Activated T-helper 1 cell treated with anti-CD3 and anti-CD28 coated beads, Interleukin-12 subunit alpha, Interleukin-12 subunit beta, Interleukin-2, Interleukin-4 antibody, amounts not matched to agents 30 ng/mL and 10 ng/mL and 1 ng/mL, durations not matched to agents 14 hours and 24 hours and 36 hours (primary cell): ENCODE measurements at regions of chr9 and their contacts with region 1.

Region 1: DNA sequence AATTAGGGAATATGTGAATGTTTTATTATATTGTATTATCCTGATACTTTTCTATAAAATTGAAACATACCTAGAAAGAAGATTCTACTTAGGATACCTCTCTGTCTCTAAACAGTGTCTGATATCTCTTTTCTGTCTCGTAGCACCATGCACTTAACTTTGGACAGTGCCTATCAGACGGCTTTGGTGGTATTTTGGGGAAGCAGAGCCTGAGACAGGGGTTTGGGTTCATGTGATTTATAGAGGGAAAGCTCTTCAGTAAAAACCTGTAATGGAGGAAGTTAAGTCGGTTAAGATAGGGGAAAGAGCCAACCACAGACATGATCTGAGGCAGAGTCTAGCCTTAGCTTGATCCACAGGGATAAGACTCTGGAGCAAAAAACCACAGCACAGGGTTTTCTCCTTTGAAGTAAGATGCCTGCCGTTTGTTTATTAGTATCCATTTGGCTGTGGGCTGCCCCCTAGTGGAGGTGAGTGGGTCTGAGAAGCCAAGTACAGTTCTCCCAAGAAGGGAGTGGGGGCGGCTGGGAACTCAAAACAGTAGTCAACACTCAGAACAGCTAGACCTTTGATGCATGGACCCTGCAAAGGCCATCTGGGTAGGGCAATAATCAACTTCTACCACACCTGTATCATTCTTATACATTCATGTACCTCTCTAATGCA is 141.2 kb upstream of the ASTN2 start:
- DNase-seq: peak; percentile 1
- H3K4me3 Mint-ChIP-seq: no peak overlapping the region
- H3K27ac Mint-ChIP-seq: no peak overlapping the region
- H3K4me1 Mint-ChIP-seq: no peaks in the 10 kb centered on the region
- H3K27me3 Mint-ChIP-seq: no peaks in the 10 kb centered on the region

Region 2: DNA sequence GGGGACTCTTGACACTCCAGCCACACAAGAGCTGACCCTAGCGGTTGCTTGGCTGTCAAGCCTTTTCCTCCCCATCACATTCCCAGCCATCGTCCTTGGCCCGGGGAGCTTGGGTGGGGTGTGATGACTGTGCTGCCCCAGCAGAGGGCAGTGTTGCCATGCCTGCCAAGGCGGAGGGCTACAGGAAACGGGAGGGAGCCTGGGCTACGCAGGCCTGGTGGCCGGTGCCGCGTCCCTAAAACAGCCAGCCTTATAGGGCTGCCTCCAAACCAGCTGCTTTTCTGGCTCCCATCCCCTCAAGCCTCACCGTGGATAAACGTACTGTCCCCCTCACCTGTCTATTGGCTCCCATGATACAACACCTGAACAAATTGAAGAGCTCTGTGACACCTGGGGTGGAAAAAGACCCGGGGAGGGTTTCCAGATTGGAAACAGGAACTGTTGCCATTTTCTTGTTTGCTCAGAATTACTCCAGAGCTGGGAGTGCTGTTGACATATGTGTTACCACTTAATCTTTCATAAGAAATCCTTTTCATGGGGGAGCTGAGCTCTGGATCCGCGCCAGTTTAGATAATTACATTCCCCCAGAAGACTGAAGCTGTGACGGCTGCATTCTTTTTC is 68.4 kb before region 1 on chr9:
- intact Hi-C with region 1: loop called (anchors 1 kb)
- DNase-seq: peak; percentile 20
- H3K4me3 Mint-ChIP-seq: no peak overlapping the region
- H3K27ac Mint-ChIP-seq: no peak overlapping the region
- H3K4me1 Mint-ChIP-seq: no peaks in the 10 kb centered on the region
- H3K27me3 Mint-ChIP-seq: no peaks in the 10 kb centered on the region